Pancreas (tissue), 10 donors: ENCODE measurements at regions of chr9 and their contacts with region 1.

Region 1: GRCh38 chr9:72280913-72281500 is 84.0 kb downstream of the ZFAND5 start:
- DNase-seq: peak; percentile 36 to 82 (median 66)
- ATAC-seq: peak; percentile 87 to 99 (median 96)
- H3K4me3 ChIP-seq: no peak overlapping the region
- H3K27ac ChIP-seq: no peak overlapping the region
- H3K4me1 ChIP-seq: no peaks in the 10 kb centered on the region
- H3K27me3 ChIP-seq: no peaks in the 10 kb centered on the region
- CTCF ChIP-seq: peak; percentile 68 to 91 (median 89)

Region 2: DNA sequence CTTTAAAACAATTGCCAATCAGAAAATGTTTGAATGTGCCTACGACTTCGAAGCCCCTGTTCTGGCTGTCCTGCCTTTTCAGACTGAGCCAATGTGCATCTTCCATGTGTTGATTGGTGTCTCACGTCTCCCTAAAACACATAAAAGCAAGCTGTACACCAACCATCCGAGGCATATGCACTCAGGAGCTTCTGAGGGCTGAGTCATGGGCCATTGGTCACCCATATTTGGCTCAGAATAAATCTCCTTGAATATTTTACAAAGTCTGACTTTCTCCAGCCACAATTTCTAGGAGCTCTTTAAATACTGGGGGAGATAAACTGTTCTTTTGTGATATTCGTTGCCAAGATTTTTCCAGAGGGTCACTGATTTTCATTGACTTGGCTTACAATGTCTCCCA is 274.5 kb before region 1 on chr9:
- intact Hi-C with region 1: no loop called
- DNase-seq: no peak
- ATAC-seq: no peak
- H3K4me3 ChIP-seq: no peak overlapping the region
- H3K27ac ChIP-seq: no peak overlapping the region
- H3K4me1 ChIP-seq: no peaks in the 10 kb centered on the region
- H3K27me3 ChIP-seq: no peaks in the 10 kb centered on the region
- CTCF ChIP-seq: no peak

Region 3: GRCh38 chr9:72599879-72600534 is 319.0 kb after region 1 on chr9:
- intact Hi-C with region 1: loop called in 1 of 3 experiments (anchors 10 kb)
- DNase-seq: no peak
- ATAC-seq: no peak
- H3K4me3 ChIP-seq: no peak overlapping the region
- H3K27ac ChIP-seq: no peak overlapping the region
- H3K4me1 ChIP-seq: no peaks in the 10 kb centered on the region
- H3K27me3 ChIP-seq: no peaks in the 10 kb centered on the region
- CTCF ChIP-seq: no peak

Region 4: DNA sequence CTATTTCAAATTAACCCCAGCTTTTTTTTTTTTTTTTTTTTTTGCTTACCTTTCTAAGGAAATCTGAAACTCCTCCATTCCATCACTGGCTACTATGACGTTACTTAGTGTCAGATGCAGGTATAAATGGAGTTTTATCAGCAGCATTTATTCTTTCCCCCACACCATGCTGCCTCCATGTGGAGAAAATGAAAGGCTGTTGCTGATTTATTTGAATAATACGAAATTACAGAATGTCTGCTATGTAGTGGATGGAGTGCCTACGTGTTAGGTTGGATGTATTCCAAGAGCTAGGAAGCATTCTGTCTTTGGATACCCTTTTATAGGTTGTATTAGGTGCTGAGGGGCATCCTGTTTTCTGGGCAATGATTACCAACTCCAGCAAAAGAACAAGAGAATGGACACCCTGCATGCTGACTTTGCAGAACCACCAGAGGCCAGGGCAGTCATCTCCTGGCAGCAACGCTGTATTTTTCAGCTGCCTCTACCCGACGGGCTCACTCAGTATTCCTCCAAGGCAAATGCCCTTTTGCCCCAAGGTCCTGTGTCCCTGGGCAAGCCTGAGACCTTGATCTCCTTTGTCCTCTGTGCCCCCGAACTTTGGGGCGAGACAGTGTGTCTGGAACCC is 472.4 kb after region 1 on chr9:
- intact Hi-C with region 1: loop called in 1 of 3 experiments (anchors 5 kb)
- DNase-seq: no peak
- ATAC-seq: peak in 1 of 4 donors; percentile 35
- H3K4me3 ChIP-seq: no peak overlapping the region
- H3K27ac ChIP-seq: no peak overlapping the region
- H3K4me1 ChIP-seq: no peaks in the 10 kb centered on the region
- H3K27me3 ChIP-seq: peaks cover 0 to 3% (median 0%) of the 10 kb centered on the region in 4 donors
- CTCF ChIP-seq: no peak

Region 5: GRCh38 chr9:72812559-72813111 is 531.6 kb after region 1 on chr9:
- intact Hi-C with region 1: loop called in 1 of 3 experiments (anchors 10 kb)
- DNase-seq: no peak
- ATAC-seq: no peak
- H3K4me3 ChIP-seq: no peak overlapping the region
- H3K27ac ChIP-seq: no peak overlapping the region
- H3K4me1 ChIP-seq: peaks cover 10 to 14% (median 11%) of the 10 kb centered on the region in 3 donors
- H3K27me3 ChIP-seq: no peaks in the 10 kb centered on the region
- CTCF ChIP-seq: no peak

Region 6: GRCh38 chr9:72827950-72828731 is 547.1 kb after region 1 on chr9:
- intact Hi-C with region 1: loop called in 1 of 3 experiments (anchors 10 kb)
- DNase-seq: peak in 1 of 6 donors; percentile 19
- ATAC-seq: peak; percentile 89 to 93 (median 92)
- H3K4me3 ChIP-seq: no peak overlapping the region
- H3K27ac ChIP-seq: peak overlapping the region in 2 of 4 donors; percentile 71 to 80
- H3K4me1 ChIP-seq: peaks cover 7 to 21% (median 18%) of the 10 kb centered on the region in 3 donors
- H3K27me3 ChIP-seq: no peaks in the 10 kb centered on the region
- CTCF ChIP-seq: no peak